GM12878 (cell line): ENCODE measurements at regions of chr2 and their contacts with region 1.

Region 1: GRCh38 chr2:7097348-7097895 is 180.2 kb downstream of the RNF144A start:
- DNase-seq: peak; percentile 35
- ATAC-seq: peak; percentile 98
- H3K4me3 ChIP-seq: peak overlapping the region; percentile 48; the same call in 1 of the 2 replicates
- H3K27ac ChIP-seq: no peak overlapping the region
- H3K4me1 ChIP-seq: peaks cover 4% of the 10 kb centered on the region; the same call in 1 of the 2 replicates
- H3K27me3 ChIP-seq: no peaks in the 10 kb centered on the region
- CTCF ChIP-seq: peak; percentile 97 to 99 (median 98); a peak in 5 of 6 replicates
- EP300 ChIP-seq: no peak
- POLR2A ChIP-seq: no peak
- RAD21 ChIP-seq: peak; percentile 84

Region 2: DNA sequence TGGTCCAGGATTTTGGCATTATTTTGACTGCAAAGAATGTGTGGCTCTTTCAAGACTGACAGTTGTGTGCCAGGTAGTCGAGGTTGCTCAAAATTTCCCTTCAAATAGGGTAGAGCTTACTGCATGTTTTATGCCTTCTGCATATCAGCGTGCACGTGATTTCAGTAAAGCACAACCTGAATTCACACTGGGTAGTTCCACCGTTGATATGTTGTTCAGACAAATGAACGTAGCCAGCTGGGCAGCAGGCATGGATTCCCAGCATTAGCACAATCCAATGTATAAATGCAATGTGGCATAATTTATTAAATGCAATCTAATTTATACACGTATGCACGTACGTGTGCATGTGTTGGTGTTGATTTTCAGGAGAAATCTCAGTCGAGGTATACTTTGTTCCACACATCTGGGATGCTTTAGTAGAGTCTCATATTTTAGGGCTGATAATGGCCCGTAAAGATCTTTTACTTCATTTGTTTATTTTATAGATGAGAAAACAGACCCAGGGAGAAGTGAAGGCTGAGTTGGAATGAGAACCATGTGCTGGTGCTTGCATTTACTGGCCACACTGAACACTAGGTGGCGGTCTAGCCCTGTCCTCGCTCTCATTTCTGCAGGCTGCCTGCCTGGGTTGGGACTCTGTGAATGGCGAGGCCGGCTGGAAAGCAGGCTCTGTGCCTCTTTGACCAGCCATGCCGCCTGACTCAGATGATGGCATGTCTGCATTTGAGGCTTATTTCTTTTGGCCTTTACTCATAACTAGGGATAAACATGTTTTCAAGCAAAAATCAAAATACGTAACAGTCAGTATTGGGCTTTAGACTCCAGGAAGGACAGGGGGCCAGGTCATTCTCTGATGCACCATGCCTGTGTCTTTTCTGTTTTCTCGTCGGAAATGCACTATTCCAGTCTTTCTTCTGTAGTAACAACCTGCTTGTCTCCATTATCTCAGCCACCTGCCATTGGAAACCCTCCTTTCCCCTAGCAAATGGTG is 59.8 kb before region 1 on chr2:
- CTCF ChIA-PET with region 1: no interaction called
- POLR2A ChIA-PET with region 1: no interaction called
- RAD21 ChIA-PET with region 1: interaction called, 4 read pairs
- SMC1A ChIA-PET with region 1: interaction called, 3 read pairs
- in situ Hi-C with region 1: no loop called
- intact Hi-C with region 1: loop called (anchors 5 kb)
- DNase-seq: no peak
- ATAC-seq: peak; percentile 99
- H3K4me3 ChIP-seq: no peak overlapping the region
- H3K27ac ChIP-seq: no peak overlapping the region
- H3K4me1 ChIP-seq: no peaks in the 10 kb centered on the region
- H3K27me3 ChIP-seq: no peaks in the 10 kb centered on the region
- CTCF ChIP-seq: peak; percentile 78 to 81 (median 79)
- EP300 ChIP-seq: no peak
- POLR2A ChIP-seq: no peak
- RAD21 ChIP-seq: peak; percentile 64

Region 3: DNA sequence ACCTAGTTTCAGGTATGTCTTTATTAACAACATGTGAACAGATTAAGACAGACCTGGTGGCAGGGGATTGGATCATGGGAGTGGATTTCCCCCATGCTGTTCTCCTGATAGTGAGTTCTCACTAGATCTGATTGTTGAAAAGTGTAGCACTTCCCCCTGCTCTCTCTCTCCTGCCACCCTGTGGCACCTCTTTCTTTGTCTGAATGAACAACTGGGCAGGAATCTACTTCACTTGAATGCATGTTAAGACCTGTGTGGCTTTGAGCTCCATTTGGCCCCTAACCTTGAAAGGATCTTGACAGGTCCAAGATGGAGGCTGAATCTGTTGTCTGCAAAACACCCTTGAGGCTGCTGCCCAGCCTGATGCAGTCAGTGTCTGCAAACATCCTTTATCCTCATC is 14.2 kb after region 1 on chr2:
- CTCF ChIA-PET with region 1: interaction called, 100 read pairs
- POLR2A ChIA-PET with region 1: interaction called, 3 read pairs
- RAD21 ChIA-PET with region 1: interaction called, 11 read pairs
- SMC1A ChIA-PET with region 1: interaction called, 10 read pairs
- in situ Hi-C with region 1: no loop called
- intact Hi-C with region 1: no loop called
- DNase-seq: no peak
- ATAC-seq: peak; percentile 36; the same call in 2 of the 3 replicates
- H3K4me3 ChIP-seq: no peak overlapping the region
- H3K27ac ChIP-seq: no peak overlapping the region
- H3K4me1 ChIP-seq: no peaks in the 10 kb centered on the region
- H3K27me3 ChIP-seq: no peaks in the 10 kb centered on the region
- CTCF ChIP-seq: peak in 2 of 3 experiments; percentile 18 to 19; a peak in 2 of 6 replicates
- EP300 ChIP-seq: no peak
- POLR2A ChIP-seq: no peak
- RAD21 ChIP-seq: no peak

Region 4: DNA sequence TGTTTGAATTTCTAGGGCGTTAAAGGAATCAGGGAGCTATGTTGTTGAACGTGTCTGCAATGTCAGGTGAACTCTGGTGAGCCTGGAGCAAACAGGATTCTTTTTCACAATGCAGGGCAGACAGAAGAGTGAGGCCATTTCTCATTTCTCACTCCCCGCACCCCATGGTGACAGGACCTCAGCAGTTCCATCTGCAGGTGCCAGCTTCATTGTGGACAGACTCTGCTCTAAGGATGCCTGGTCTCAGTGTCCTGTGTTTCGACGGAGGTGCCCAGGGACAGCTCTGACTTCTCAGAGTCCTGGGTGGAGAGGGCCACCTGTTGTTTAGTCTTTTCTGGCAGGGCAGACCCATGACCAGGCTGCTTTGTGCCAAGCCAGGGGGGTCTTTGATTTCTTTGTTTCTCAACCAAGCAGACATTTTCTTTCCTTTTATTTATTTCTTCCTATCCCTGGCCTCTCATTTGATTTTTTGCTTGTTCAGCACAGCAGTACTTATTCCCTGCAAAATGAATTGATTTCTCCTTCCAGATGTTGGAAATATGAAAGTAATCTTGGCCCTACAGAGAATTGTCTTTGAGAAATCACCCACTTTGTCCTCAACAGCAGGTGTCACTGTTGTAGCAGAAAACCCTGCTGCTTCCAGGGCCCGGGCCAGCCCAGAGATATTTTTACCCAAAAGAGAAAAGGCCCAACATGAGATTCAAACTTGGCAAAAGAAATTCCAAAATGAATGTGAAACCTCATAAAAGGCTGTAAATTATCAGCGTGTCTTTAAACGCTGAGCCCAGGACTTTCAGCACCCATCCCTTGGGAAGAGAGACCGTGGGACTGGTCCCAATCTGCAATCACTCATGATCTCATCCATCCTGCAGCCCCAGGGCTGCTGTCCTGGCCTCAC is 21.4 kb after region 1 on chr2:
- CTCF ChIA-PET with region 1: interaction called, 100 read pairs
- POLR2A ChIA-PET with region 1: no interaction called
- RAD21 ChIA-PET with region 1: interaction called, 11 read pairs
- SMC1A ChIA-PET with region 1: interaction called, 7 read pairs
- in situ Hi-C with region 1: no loop called
- intact Hi-C with region 1: no loop called
- DNase-seq: no peak
- ATAC-seq: peak; percentile 85
- H3K4me3 ChIP-seq: no peak overlapping the region
- H3K27ac ChIP-seq: no peak overlapping the region
- H3K4me1 ChIP-seq: no peaks in the 10 kb centered on the region
- H3K27me3 ChIP-seq: no peaks in the 10 kb centered on the region
- CTCF ChIP-seq: peak; percentile 33 to 65 (median 43); a peak in 5 of 6 replicates
- EP300 ChIP-seq: no peak
- POLR2A ChIP-seq: no peak
- RAD21 ChIP-seq: peak; percentile 53

Region 5: GRCh38 chr2:7672027-7672684 is 574.7 kb after region 1 on chr2:
- CTCF ChIA-PET with region 1: no interaction called
- POLR2A ChIA-PET with region 1: no interaction called
- RAD21 ChIA-PET with region 1: no interaction called
- SMC1A ChIA-PET with region 1: no interaction called
- in situ Hi-C with region 1: no loop called
- intact Hi-C with region 1: loop called (anchors 10 kb)
- DNase-seq: peak; percentile 35
- ATAC-seq: no peak
- H3K4me3 ChIP-seq: no peak overlapping the region
- H3K27ac ChIP-seq: no peak overlapping the region
- H3K4me1 ChIP-seq: no peaks in the 10 kb centered on the region
- H3K27me3 ChIP-seq: no peaks in the 10 kb centered on the region
- CTCF ChIP-seq: peak; percentile 40 to 76 (median 70)
- EP300 ChIP-seq: no peak
- POLR2A ChIP-seq: no peak
- RAD21 ChIP-seq: peak; percentile 47

Region 6: GRCh38 chr2:8761529-8762164 is 1664.2 kb after region 1 on chr2:
- CTCF ChIA-PET with region 1: interaction called, 9 read pairs
- POLR2A ChIA-PET with region 1: no interaction called
- RAD21 ChIA-PET with region 1: interaction called, 7 read pairs
- SMC1A ChIA-PET with region 1: interaction called, 4 read pairs
- in situ Hi-C with region 1: no loop called
- intact Hi-C with region 1: loop called (anchors 5 kb)
- DNase-seq: peak; percentile 35
- ATAC-seq: peak; percentile 65
- H3K4me3 ChIP-seq: no peak overlapping the region
- H3K27ac ChIP-seq: no peak overlapping the region
- H3K4me1 ChIP-seq: no peaks in the 10 kb centered on the region
- H3K27me3 ChIP-seq: no peaks in the 10 kb centered on the region
- CTCF ChIP-seq: peak; percentile 49 to 65 (median 56)
- EP300 ChIP-seq: no peak
- POLR2A ChIP-seq: no peak
- RAD21 ChIP-seq: peak; percentile 67